Kidney (tissue), 22 donors: ENCODE measurements at regions of chr20 and their contacts with region 1.

Region 1: DNA sequence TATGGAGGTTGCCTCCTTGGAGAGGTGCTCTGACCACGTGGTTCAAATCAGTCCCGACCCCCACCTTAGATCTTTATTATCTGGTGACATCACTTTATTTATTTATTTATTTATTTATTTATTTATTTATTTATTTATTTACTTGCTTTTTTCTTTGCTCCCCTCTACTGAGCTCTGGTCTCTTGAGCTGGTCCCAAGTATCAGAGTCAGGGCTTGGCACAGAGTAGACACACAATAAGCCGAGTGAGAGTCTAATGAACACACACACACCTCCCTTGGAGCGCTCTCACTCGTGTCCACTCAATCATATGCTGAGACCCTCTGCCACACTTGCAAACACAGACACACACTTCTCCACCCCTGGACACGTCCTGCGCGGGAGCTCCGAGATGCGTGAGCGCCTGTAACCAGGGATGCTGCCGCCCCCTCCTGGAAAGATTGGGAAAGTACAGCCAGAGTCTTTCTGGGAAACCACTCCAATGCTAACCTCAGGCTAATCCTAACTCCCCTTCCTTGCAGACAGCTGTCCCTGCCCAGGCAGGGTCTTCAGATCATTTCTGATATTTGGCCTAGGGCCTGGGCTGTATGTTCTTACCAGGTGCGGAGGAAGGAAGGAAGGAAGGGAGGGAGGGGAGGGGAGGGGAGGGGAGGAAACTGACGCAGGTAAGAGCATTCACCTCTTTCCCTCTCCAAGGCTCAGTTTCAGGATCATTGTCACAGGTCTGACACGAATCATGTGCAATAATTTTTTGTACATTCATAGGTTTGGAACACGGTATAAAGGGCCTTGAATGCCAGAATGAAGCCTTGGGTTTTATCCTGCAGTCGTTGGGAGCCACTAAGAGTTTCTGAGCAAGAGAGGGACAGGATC is 70.9 kb downstream of the STK35 start:
- DNase-seq: peak in 4 of 5 donors; percentile 67 to 81 (median 76)
- H3K4me3 ChIP-seq: no peak overlapping the region
- H3K27ac ChIP-seq: no peak overlapping the region
- H3K4me1 ChIP-seq: no peaks in the 10 kb centered on the region
- H3K27me3 ChIP-seq: no peaks in the 10 kb centered on the region
- CTCF ChIP-seq: peak; percentile 79

Region 2: GRCh38 chr20:1965520-1966351 is 206.8 kb before region 1 on chr20:
- intact Hi-C with region 1: loop called (anchors 5 kb)
- DNase-seq: peak; percentile 78 to 88 (median 85)
- H3K4me3 ChIP-seq: no peak overlapping the region
- H3K27ac ChIP-seq: no peak overlapping the region
- H3K4me1 ChIP-seq: no peaks in the 10 kb centered on the region
- H3K27me3 ChIP-seq: no peaks in the 10 kb centered on the region
- CTCF ChIP-seq: peak; percentile 90

Region 3: DNA sequence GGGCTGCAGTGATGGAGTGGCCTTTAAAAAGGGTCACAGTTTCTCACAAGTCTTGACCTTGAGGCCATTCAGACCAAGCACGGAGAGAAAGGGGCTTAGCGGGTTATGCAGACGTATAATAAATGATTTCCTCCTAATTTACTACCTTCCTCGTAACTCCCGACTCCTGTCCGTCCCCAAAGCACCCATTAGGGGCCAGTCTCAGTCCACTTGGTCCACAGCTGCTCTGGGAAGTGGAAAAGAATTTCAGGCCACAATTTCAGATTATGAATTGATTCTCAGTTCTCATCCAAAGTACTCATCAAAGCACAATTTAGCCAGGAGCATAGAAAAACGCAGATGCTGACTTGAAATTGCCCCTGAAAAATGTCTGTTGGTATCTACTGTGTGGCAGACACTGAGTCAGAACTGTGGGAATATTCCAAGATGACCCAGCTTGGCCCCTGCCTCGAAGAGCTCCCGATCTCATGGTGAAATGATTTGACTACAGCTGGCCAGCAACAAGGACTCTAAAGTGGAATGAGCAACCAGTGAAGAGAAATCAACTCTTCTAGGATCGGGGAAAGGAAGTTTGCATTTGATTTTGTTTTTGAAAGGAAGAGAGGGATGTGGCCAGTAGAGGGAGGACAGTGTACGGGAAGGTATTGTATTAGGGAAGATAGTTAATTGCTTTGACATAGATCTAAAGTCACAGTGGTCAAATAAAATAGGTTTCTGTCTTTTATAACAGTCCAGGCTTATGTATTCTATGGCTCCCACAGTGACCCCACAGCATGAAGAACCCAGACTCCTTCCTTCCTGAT is 86.2 kb before region 1 on chr20:
- intact Hi-C with region 1: loop called (anchors 10 kb)
- DNase-seq: no peak
- H3K4me3 ChIP-seq: no peak overlapping the region
- H3K27ac ChIP-seq: no peak overlapping the region
- H3K4me1 ChIP-seq: no peaks in the 10 kb centered on the region
- H3K27me3 ChIP-seq: no peaks in the 10 kb centered on the region
- CTCF ChIP-seq: no peak

Region 4: GRCh38 chr20:2101865-2102584 is 70.5 kb before region 1 on chr20:
- intact Hi-C with region 1: no loop called
- DNase-seq: peak; percentile 93 to 97 (median 96)
- H3K4me3 ChIP-seq: peak overlapping the region; percentile 73 to 91 (median 91)
- H3K27ac ChIP-seq: peak overlapping the region; percentile 99 to 100
- H3K4me1 ChIP-seq: peaks cover 8 to 21% (median 15%) of the 10 kb centered on the region in 3 donors
- H3K27me3 ChIP-seq: no peaks in the 10 kb centered on the region
- CTCF ChIP-seq: no peak